Panc1 (cell line): ENCODE measurements at regions of chr7 and their contacts with region 1.

Region 1: GRCh38 chr7:6071406-6071805 is 40.2 kb downstream of the ANKRD61 start:
- DNase-seq: no peak
- ATAC-seq: no peak
- H3K4me3 ChIP-seq: no peak overlapping the region
- H3K27ac ChIP-seq: no peak overlapping the region
- H3K4me1 ChIP-seq: no peaks in the 10 kb centered on the region
- H3K27me3 ChIP-seq: no peaks in the 10 kb centered on the region
- CTCF ChIP-seq: no peak

Region 2: GRCh38 chr7:4463866-4464265 is 1607.5 kb before region 1 on chr7:
- CTCF ChIA-PET with region 1: no interaction called
- POLR2A ChIA-PET with region 1: interaction called, 14 read pairs
- in situ Hi-C with region 1: no loop called
- intact Hi-C with region 1: no loop called
- DNase-seq: no peak
- ATAC-seq: no peak
- H3K4me3 ChIP-seq: no peak overlapping the region
- H3K27ac ChIP-seq: no peak overlapping the region
- H3K4me1 ChIP-seq: no peaks in the 10 kb centered on the region
- H3K27me3 ChIP-seq: peaks cover 7% of the 10 kb centered on the region; the same call in 1 of the 2 replicates
- CTCF ChIP-seq: no peak

Region 3: DNA sequence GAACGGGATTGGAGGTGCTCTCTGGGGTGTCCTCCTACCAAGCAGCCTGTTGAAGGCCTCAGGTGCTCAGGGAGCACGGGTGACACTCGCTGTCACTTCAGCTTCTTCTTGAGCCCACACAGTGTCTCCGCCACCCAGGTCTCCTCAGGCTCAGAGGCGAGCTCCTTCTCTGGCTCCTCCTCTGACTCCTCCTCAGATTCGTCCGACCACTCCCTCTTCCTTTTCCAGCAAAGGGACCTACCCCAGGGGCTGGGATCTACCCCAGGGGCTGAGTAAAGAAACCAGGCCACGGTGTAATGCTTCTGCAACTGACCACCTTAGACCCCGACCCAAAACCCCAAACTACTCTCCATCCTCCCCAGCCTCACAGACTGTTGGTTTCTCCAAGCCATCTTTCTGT is 1035.0 kb before region 1 on chr7:
- CTCF ChIA-PET with region 1: no interaction called
- POLR2A ChIA-PET with region 1: no interaction called
- in situ Hi-C with region 1: no loop called
- intact Hi-C with region 1: no loop called
- DNase-seq: no peak
- ATAC-seq: no peak
- H3K4me3 ChIP-seq: no peak overlapping the region
- H3K27ac ChIP-seq: no peak overlapping the region
- H3K4me1 ChIP-seq: no peaks in the 10 kb centered on the region
- H3K27me3 ChIP-seq: no peaks in the 10 kb centered on the region
- CTCF ChIP-seq: no peak

Region 4: GRCh38 chr7:6092953-6093354 is 21.5 kb after region 1 on chr7:
- CTCF ChIA-PET with region 1: no interaction called
- POLR2A ChIA-PET with region 1: no interaction called
- in situ Hi-C with region 1: no loop called
- intact Hi-C with region 1: no loop called
- DNase-seq: no peak
- ATAC-seq: peak; percentile 57; the same call in 1 of the 2 replicates
- H3K4me3 ChIP-seq: no peak overlapping the region
- H3K27ac ChIP-seq: no peak overlapping the region
- H3K4me1 ChIP-seq: no peaks in the 10 kb centered on the region
- H3K27me3 ChIP-seq: no peaks in the 10 kb centered on the region
- CTCF ChIP-seq: no peak